Transverse colon (tissue), 4 donors: ENCODE measurements at regions of chr11 and their contacts with region 1.

Region 1: DNA sequence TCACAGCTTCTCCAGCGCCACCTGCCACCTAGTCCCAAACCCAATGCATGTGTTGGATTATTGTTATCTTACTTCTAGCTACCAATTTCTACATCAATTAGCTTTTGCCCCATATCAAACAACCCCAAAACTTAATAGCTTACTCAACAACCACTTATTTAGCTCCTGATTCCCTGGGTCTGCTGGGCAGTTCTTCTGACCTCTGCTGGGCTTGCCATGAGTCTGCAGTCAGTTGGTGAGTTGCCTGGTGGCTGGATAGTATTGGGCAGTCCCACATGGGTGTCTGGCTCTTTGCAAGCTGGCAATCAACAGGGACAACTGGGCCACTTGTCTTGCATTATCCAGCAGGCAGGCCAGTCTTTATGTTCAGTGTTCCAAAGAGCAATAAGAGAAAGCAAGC is 13.6 kb upstream of the MS4A15 start:
- DNase-seq: no peak
- H3K4me3 ChIP-seq: no peak overlapping the region
- H3K27ac ChIP-seq: no peak overlapping the region
- H3K4me1 ChIP-seq: no peaks in the 10 kb centered on the region
- H3K27me3 ChIP-seq: peaks cover 4% of the 10 kb centered on the region
- CTCF ChIP-seq: peak in 2 of 5 experiments; percentile 3 to 10
- EP300 ChIP-seq: no peak
- POLR2A ChIP-seq: no peak

Region 2: GRCh38 chr11:59459916-59460315 is 1283.1 kb before region 1 on chr11:
- in situ Hi-C with region 1: no loop called
- intact Hi-C with region 1: loop called (anchors 10 kb)
- DNase-seq: no peak
- H3K4me3 ChIP-seq: no peak overlapping the region
- H3K27ac ChIP-seq: no peak overlapping the region
- H3K4me1 ChIP-seq: no peaks in the 10 kb centered on the region
- H3K27me3 ChIP-seq: no peaks in the 10 kb centered on the region
- CTCF ChIP-seq: no peak
- EP300 ChIP-seq: no peak
- POLR2A ChIP-seq: no peak